Vagina (tissue), 2 donors: ENCODE measurements at regions of chr10 and their contacts with region 1.

Region 1: DNA sequence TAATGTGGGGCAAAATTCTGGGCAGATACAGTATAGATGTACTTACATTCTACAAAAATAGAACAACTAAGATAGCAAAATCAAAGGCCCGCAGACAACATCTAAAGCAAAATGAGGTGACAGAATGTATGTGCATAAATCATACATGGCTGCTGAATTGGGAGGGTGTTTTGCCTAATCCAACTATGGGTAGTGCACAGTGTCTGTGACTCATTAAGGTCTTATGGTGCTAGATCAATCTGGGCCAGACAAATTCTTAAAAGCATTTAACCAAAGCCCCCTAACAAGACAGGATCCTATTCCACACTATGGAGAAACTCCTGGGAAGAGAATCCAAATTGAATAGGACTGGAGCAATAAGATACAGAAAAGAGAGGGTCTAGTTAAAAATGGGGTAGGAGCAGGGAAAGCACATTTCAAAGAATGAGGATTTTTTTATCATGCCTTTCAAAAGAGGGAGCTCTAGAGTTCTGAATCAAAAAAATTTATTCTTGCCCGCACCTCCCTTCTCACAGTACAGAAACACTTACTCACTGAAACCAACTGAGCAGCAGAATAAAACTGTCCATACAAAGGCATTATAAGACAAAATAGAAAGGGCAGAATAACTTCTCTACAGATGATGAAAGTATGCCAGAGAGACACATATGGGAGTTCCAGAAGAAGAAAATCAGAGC is 181.3 kb downstream of the RNLS start:
- DNase-seq: no peak
- H3K4me3 ChIP-seq: no peak overlapping the region
- H3K27ac ChIP-seq: no peak overlapping the region
- H3K4me1 ChIP-seq: peaks cover 15% of the 10 kb centered on the region
- H3K27me3 ChIP-seq: no peaks in the 10 kb centered on the region
- CTCF ChIP-seq: no peak
- POLR2A ChIP-seq: no peak

Region 2: GRCh38 chr10:88553116-88553752 is 151.4 kb after region 1 on chr10:
- intact Hi-C with region 1: loop called (anchors 10 kb)
- DNase-seq: no peak
- H3K4me3 ChIP-seq: no peak overlapping the region
- H3K27ac ChIP-seq: no peak overlapping the region
- H3K4me1 ChIP-seq: no peaks in the 10 kb centered on the region
- H3K27me3 ChIP-seq: no peaks in the 10 kb centered on the region
- CTCF ChIP-seq: peak in 2 of 3 experiments; percentile 73 to 76
- POLR2A ChIP-seq: no peak